Posterior vena cava (tissue), 2 donors: ENCODE measurements at regions of chr5 and their contacts with region 1.

Region 1: GRCh38 chr5:54959673-54960418 is 25.5 kb downstream of the ESM1 start:
- DNase-seq: no peak

Region 2: GRCh38 chr5:55146543-55147151 is 186.8 kb after region 1 on chr5:
- intact Hi-C with region 1: loop called in 1 of 2 experiments (anchors 10 kb)
- DNase-seq: peak; percentile 88